Astrocyte of the cerebellum (primary cell): ENCODE measurements at regions of chr1 and their contacts with region 1.

Region 1: GRCh38 chr1:167803358-167804207 is 81.8 kb downstream of the MPZL1 start:
- DNase-seq: peak; percentile 92
- H3K4me3 ChIP-seq: no peak overlapping the region
- CTCF ChIP-seq: peak; percentile 97

Region 2: GRCh38 chr1:167721617-167722151 is 81.9 kb before region 1 on chr1 and contains the start of gene MPZL1:
- in situ Hi-C with region 1: loop called (anchors 5 kb)
- DNase-seq: peak; percentile 78
- H3K4me3 ChIP-seq: peak within 1 kb of the TSS; percentile 79
- CTCF ChIP-seq: no peak

Region 3: GRCh38 chr1:167752219-167752985 is 51.2 kb before region 1 on chr1:
- in situ Hi-C with region 1: no loop called
- DNase-seq: no peak
- H3K4me3 ChIP-seq: no peak overlapping the region
- CTCF ChIP-seq: no peak